ENCODE measurements at regions of chr3 and their contacts with region 1.

Region 1: GRCh38 chr3:136752422-136753325 is 496 bp upstream of the STAG1 start:
- DNase-seq: peak; percentile 63 to 97
- ATAC-seq: peak; percentile 86 to 95
- H3K4me3 ChIP-seq: peak overlapping the region; percentile 57
- H3K27ac ChIP-seq: peak overlapping the region; percentile 93 to 100
- H3K4me1 ChIP-seq: peaks cover 22% of the 10 kb centered on the region
- CTCF ChIP-seq: 0 out of 3 replicates have a peak, but pooled peaks have one; percentile 5
- EP300 ChIP-seq: no peak
- POLR2A ChIP-seq: peak; percentile 27
- RAD21 ChIP-seq: peak in 1 of 2 experiments; percentile 32; a peak in 2 of 5 replicates

Region 2: DNA sequence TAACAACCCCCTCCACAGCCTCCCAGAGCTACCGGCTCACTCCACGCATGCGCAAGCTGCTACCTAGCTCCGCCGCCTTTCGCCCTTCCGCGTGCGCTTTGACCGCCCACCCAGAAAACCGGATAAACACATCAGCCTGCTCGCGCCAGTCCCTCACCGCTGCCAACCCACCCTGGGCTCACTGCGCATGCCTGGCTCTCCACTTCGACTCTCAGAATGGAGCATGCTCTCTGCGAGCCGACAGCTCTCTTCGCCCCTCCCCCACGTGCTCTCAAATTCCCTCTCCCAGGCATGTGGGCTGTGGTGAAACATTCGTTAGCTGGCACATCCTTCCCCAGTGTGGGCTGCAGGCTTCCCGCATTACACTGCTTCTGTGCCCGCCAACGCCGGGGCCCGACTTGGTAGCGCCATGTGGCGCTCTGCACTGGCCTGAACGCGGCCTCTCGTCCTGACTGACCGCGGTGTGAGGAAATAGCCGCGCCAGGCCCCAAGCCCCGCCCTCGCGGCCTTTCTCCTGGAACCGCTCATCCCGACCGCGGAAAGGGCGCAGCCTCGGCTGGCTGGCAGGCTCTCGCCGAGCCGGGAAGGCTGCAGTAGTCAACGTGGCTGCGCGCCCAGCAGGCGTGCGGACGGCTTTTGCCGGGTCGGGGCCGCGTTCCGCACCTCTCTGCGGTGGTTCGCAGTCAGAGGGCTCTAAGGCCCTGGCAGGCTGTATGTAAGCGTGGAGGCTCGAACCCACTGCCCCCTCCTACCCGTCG is 556.1 kb before region 1 on chr3:
- CTCF ChIA-PET with region 1: no interaction called
- POLR2A ChIA-PET with region 1: interaction called, 28 read pairs
- DNase-seq: peak; percentile 97 to 99
- ATAC-seq: peak; percentile 81 to 89
- H3K4me3 ChIP-seq: peak overlapping the region; percentile 82
- H3K27ac ChIP-seq: peak overlapping the region; percentile 97 to 99
- H3K4me1 ChIP-seq: peaks cover 11% of the 10 kb centered on the region
- CTCF ChIP-seq: no peak
- EP300 ChIP-seq: no peak
- POLR2A ChIP-seq: peak; percentile 72
- RAD21 ChIP-seq: no peak; a peak in 1 of 5 replicates

Region 3: GRCh38 chr3:136404056-136404455 is 348.6 kb before region 1 on chr3:
- CTCF ChIA-PET with region 1: interaction called, 10 read pairs
- POLR2A ChIA-PET with region 1: no interaction called
- DNase-seq: no peak
- ATAC-seq: no peak
- H3K4me3 ChIP-seq: no peak overlapping the region
- H3K27ac ChIP-seq: no peak overlapping the region
- H3K4me1 ChIP-seq: no peaks in the 10 kb centered on the region
- CTCF ChIP-seq: no peak
- EP300 ChIP-seq: no peak
- POLR2A ChIP-seq: no peak
- RAD21 ChIP-seq: no peak

Region 4: DNA sequence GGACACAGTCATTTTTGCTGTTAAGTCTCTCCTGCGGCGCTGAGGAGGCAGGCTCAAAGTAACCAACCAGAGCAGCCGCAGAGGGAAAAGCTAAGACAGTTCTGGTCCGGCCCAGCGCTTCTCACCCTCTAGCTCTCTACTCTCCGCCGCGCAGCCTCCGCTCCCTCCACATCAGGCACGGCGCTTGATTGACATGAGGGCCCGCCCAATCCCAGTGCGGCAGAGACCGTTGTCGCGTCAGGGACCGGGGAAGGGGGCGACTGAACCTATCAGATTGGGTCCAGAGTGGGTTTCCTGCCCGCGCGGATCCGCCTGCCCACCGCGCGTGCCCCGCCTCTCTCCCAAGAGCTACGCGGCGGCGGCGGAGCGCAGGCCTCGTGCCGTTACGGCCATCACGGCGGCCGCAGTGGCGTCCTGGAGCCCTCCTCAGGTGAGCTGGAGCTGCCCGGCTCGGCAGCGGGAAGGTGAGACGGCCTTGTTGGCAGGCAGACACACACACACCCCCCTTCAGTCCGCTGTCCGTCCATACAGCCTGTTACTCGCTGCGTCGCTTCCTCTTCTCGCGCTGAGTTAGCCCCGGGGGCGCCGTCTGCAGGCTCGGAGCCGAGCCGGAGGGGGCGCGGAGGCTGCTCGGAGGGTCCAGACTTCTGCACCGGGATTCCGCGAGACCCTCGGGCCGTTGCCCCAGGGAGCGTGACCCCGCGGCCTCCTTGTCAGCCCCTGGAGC is 109.4 kb after region 1 on chr3 and contains the start of gene NCK1:
- CTCF ChIA-PET with region 1: interaction called, 15 read pairs
- POLR2A ChIA-PET with region 1: interaction called, 30 read pairs
- DNase-seq: peak; percentile 92 to 96
- ATAC-seq: peak; percentile 99
- H3K4me3 ChIP-seq: peak within 1 kb of the TSS; percentile 77
- H3K27ac ChIP-seq: peak within 1 kb of the TSS; percentile 91 to 98
- H3K4me1 ChIP-seq: 0 out of 3 replicates have a peak, but pooled peaks cover 12% of the 10 kb centered on the region
- CTCF ChIP-seq: no peak
- EP300 ChIP-seq: no peak
- POLR2A ChIP-seq: peak; percentile 89
- RAD21 ChIP-seq: no peak
- polyA plus RNA-seq, gene NCK1: 47.9 and 60.8 TPM in 2 replicates

Region 5: DNA sequence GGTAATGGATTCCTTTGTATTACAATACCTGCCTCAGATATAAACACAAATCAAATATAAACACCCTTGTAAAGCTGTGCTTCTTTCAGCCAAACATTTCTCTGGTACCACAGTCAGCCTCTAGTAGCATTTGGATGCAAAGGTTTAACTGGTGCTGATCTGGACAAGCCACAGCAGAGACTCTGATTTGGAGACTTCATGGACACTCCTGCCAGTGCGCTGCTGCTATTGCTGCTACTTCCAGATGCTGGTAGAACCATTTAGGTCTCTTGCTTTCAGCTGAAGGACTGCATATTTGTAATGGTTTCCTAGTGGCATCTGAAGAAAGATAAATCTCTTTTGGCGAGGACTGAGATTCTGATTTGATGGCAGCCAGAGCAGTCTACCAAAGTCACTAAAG is 146.3 kb after region 1 on chr3:
- CTCF ChIA-PET with region 1: no interaction called
- POLR2A ChIA-PET with region 1: no interaction called
- DNase-seq: no peak
- ATAC-seq: no peak
- H3K4me3 ChIP-seq: no peak overlapping the region
- H3K27ac ChIP-seq: no peak overlapping the region
- H3K4me1 ChIP-seq: no peaks in the 10 kb centered on the region; the same call in 2 of the 3 replicates
- CTCF ChIP-seq: no peak
- EP300 ChIP-seq: no peak
- POLR2A ChIP-seq: no peak
- RAD21 ChIP-seq: no peak

Measured in A549 (cell line).